GM12878 (cell line): ENCODE measurements at regions of chr11 and their contacts with region 1.

Region 1: DNA sequence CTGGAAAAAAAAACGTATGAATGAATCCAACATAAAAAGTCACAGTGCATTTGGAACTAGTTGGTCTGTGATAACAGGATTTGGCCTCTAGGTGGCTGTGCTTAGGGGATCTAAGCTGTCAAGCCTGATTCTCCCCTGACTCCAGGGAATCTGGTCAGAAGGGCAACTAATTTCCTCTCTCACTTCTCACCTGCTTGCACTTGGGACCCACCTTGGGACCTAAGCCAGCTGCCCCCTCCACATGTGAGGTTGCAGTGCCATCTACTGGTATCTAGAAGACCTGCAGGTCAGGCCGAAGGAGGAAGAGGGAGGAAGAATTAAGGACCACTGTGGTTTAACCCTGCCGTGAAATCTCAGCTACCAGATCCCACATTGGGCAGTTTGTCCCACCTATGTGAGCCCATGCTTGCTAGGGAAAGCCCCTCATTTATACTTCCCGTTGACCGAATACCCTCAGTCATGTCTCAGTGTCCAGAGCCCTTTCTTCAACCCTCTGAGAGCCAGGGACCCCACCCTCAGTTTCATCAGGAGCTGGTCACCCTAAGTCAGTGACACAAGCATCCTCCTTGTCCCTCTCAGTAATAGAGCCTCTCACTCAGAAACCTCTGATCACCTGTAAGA is 33.2 kb upstream of the CAVIN3 start:
- DNase-seq: peak; percentile 25
- ATAC-seq: peak; percentile 91
- H3K4me3 ChIP-seq: no peak overlapping the region
- H3K27ac ChIP-seq: no peak overlapping the region
- H3K4me1 ChIP-seq: no peaks in the 10 kb centered on the region
- H3K27me3 ChIP-seq: no peaks in the 10 kb centered on the region
- CTCF ChIP-seq: peak; percentile 97 to 98 (median 98)
- EP300 ChIP-seq: no peak
- POLR2A ChIP-seq: no peak
- RAD21 ChIP-seq: peak; percentile 99

Region 2: DNA sequence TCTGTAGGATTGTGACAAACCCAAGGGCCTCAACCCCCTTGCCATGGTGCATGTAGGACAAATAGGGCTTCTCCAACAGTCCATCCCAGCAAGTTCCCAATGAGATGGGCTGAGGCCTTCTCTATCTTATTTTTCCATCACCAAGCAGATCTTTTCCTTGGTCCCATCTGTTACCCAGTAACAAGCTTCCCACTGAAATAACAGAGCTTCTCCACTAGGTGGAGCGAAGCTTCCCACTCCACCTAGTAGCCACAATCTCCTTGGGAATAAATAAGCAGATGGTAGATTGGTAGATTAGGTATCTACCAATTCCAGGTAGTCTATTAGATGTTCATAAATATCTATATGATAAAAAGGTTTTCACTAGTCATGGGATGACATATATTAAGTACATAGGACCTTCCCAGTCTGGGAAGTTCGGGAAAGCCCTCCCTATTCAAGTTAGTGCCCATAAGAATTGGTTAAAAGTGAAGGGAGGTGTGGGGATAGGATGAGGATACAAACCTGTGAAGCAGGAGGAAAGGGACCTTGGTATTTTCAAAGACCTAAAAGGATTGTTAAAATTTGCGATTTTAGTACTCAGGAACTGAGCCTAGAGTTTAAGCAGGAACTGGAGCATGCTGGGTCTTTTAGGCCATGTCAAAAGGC is 360.7 kb before region 1 on chr11:
- CTCF ChIA-PET with region 1: interaction called, 14 read pairs
- POLR2A ChIA-PET with region 1: no interaction called
- RAD21 ChIA-PET with region 1: no interaction called
- SMC1A ChIA-PET with region 1: no interaction called
- in situ Hi-C with region 1: no loop called
- intact Hi-C with region 1: no loop called
- DNase-seq: no peak
- ATAC-seq: peak; percentile 52; the same call in 2 of the 3 replicates
- H3K4me3 ChIP-seq: no peak overlapping the region
- H3K27ac ChIP-seq: no peak overlapping the region
- H3K4me1 ChIP-seq: no peaks in the 10 kb centered on the region
- H3K27me3 ChIP-seq: no peaks in the 10 kb centered on the region
- CTCF ChIP-seq: peak; percentile 43 to 55 (median 49); a peak in 5 of 6 replicates
- EP300 ChIP-seq: no peak
- POLR2A ChIP-seq: no peak
- RAD21 ChIP-seq: peak; percentile 37

Region 3: DNA sequence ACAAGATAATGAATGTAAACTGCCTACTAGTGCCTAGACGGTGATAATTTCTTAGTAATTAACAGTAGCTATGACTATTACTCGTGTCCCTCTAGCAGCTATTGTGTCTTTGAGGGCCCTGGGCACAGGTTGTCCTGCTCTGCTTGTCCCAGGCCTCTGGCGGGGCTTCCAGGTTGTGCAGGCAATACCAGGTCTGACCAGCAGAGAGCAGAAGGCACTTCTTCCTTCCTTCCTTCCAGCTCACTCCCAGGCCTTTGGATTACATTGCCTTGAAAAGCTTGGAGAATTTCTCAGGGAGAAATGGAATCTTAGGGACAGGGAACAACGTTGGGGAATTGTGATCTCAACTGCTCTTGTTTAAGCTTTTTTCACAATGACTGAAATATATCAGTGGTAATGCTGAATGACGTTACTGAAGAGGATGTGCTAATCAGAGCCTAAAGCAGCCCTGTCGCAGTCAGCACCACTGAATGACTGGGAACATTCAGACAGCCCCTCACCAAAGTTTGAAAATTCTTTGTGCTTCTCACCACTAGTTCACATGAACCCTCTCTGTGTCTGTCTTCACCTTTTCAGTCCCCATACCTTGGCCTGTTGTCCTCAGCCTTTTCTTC is 102.2 kb before region 1 on chr11:
- CTCF ChIA-PET with region 1: interaction called, 61 read pairs
- POLR2A ChIA-PET with region 1: no interaction called
- RAD21 ChIA-PET with region 1: interaction called, 34 read pairs
- SMC1A ChIA-PET with region 1: interaction called, 22 read pairs
- in situ Hi-C with region 1: loop called (anchors 5 kb)
- intact Hi-C with region 1: loop called (anchors 1 kb)
- DNase-seq: no peak
- ATAC-seq: peak; percentile 91
- H3K4me3 ChIP-seq: no peak overlapping the region
- H3K27ac ChIP-seq: no peak overlapping the region
- H3K4me1 ChIP-seq: no peaks in the 10 kb centered on the region
- H3K27me3 ChIP-seq: 0 out of 4 replicates have a peak, but pooled peaks cover 0 to 3% of the 10 kb centered on the region in 2 experiments
- CTCF ChIP-seq: peak; percentile 68 to 86 (median 75)
- EP300 ChIP-seq: no peak
- POLR2A ChIP-seq: no peak
- RAD21 ChIP-seq: peak; percentile 56

Region 4: GRCh38 chr11:6298605-6299004 is 54.9 kb before region 1 on chr11:
- CTCF ChIA-PET with region 1: interaction called, 61 read pairs
- POLR2A ChIA-PET with region 1: interaction called, 7 read pairs
- RAD21 ChIA-PET with region 1: interaction called, 6 read pairs
- SMC1A ChIA-PET with region 1: interaction called, 8 read pairs
- in situ Hi-C with region 1: no loop called
- intact Hi-C with region 1: loop called (anchors 1 kb)
- DNase-seq: no peak
- ATAC-seq: peak; percentile 96
- H3K4me3 ChIP-seq: no peak overlapping the region
- H3K27ac ChIP-seq: no peak overlapping the region
- H3K4me1 ChIP-seq: no peaks in the 10 kb centered on the region
- H3K27me3 ChIP-seq: no peaks in the 10 kb centered on the region
- CTCF ChIP-seq: peak; percentile 49 to 75 (median 67); a peak in 5 of 6 replicates
- EP300 ChIP-seq: no peak
- POLR2A ChIP-seq: no peak
- RAD21 ChIP-seq: peak; percentile 28; the same call in 1 of the 2 replicates

Region 5: GRCh38 chr11:6326985-6327384 is 26.5 kb before region 1 on chr11:
- CTCF ChIA-PET with region 1: interaction called, 39 read pairs
- POLR2A ChIA-PET with region 1: no interaction called
- RAD21 ChIA-PET with region 1: interaction called, 6 read pairs
- SMC1A ChIA-PET with region 1: interaction called, 6 read pairs
- in situ Hi-C with region 1: no loop called
- intact Hi-C with region 1: no loop called
- DNase-seq: no peak
- ATAC-seq: no peak
- H3K4me3 ChIP-seq: no peak overlapping the region
- H3K27ac ChIP-seq: no peak overlapping the region
- H3K4me1 ChIP-seq: peaks cover 1% of the 10 kb centered on the region; the same call in 1 of the 2 replicates
- H3K27me3 ChIP-seq: 0 out of 4 replicates have a peak, but pooled peaks cover 0 to 2% of the 10 kb centered on the region in 2 experiments
- CTCF ChIP-seq: no peak
- EP300 ChIP-seq: no peak
- POLR2A ChIP-seq: no peak
- RAD21 ChIP-seq: no peak

Region 6: DNA sequence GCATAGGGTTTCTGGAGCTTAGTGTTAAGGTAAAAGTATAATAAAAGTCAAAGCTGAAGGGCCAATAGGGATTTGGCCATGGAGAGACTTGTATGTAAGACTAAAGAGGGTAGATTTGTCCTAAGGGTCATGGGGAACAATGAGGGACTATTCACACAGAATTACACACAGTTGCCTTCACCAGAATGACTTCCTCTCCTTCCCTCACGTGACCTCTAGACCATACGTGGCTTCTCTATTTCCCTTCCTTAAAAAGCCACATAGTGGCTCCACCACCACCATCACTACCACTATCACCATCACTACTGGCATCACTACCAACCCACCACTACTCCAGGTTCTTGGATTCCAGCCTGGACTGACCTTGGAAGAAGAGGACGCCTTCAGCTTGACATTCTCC is 84.5 kb after region 1 on chr11:
- CTCF ChIA-PET with region 1: no interaction called
- POLR2A ChIA-PET with region 1: no interaction called
- RAD21 ChIA-PET with region 1: no interaction called
- SMC1A ChIA-PET with region 1: no interaction called
- in situ Hi-C with region 1: no loop called
- intact Hi-C with region 1: no loop called
- DNase-seq: no peak
- ATAC-seq: 0 out of 3 replicates have a peak, but pooled peaks have one; percentile 10
- H3K4me3 ChIP-seq: no peak overlapping the region
- H3K27ac ChIP-seq: no peak overlapping the region
- H3K4me1 ChIP-seq: peaks cover 17% of the 10 kb centered on the region
- H3K27me3 ChIP-seq: no peaks in the 10 kb centered on the region
- CTCF ChIP-seq: no peak
- EP300 ChIP-seq: no peak
- POLR2A ChIP-seq: no peak
- RAD21 ChIP-seq: no peak